ENCODE measurements at regions of chr6 and their contacts with region 1.

Region 1: GRCh38 chr6:30942338-30943060 is 1.7 kb downstream of the MUCL3 start:
- DNase-seq: peak; percentile 83 to 95
- H3K4me3 ChIP-seq: no peak overlapping the region
- H3K27ac ChIP-seq: no peak overlapping the region
- H3K4me1 ChIP-seq: peaks cover 6 to 14% (median 9%) of the 10 kb centered on the region in 4 experiments
- H3K27me3 ChIP-seq: no peaks in the 10 kb centered on the region; a peak in 1 of 7 replicates
- CTCF ChIP-seq: peak; percentile 48 to 62 (median 61)
- EP300 ChIP-seq: 0 out of 3 replicates have a peak, but pooled peaks of 1 of the 2 experiments have one; percentile 44
- POLR2A ChIP-seq: peak in 1 of 2 experiments; percentile 60; a peak in 2 of 3 replicates
- RAD21 ChIP-seq: peak; percentile 49 to 58

Region 2: GRCh38 chr6:30857549-30857948 is 85.0 kb before region 1 on chr6:
- CTCF ChIA-PET with region 1: no interaction called
- POLR2A ChIA-PET with region 1: no interaction called
- DNase-seq: no peak
- H3K4me3 ChIP-seq: no peak overlapping the region
- H3K27ac ChIP-seq: no peak overlapping the region
- H3K4me1 ChIP-seq: peaks cover 0 to 3% (median 2%) of the 10 kb centered on the region in 4 experiments; a peak in 2 of 7 replicates
- H3K27me3 ChIP-seq: no peaks in the 10 kb centered on the region
- CTCF ChIP-seq: no peak
- EP300 ChIP-seq: no peak
- POLR2A ChIP-seq: no peak
- RAD21 ChIP-seq: no peak

Region 3: DNA sequence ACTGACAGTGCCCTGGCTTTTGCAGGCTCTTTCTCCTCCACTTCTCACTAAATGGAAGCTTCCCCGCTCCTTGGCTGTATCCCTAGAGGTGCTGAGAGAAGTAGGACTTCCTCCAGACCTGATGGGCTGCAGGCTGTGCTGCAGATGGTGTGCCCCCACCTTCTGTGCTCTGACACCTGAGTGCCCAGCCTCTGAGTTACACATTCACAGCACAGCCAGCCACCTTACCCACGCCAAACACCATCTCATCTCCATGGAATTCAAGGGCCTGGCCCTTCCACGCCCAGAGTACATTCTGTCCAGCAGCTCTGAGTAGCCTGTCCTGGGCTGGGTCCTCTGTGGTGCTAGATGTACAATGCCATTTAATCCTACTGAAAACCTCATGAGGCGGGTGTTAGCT is 15.9 kb before region 1 on chr6:
- CTCF ChIA-PET with region 1: interaction called, 21 read pairs
- POLR2A ChIA-PET with region 1: interaction called, 8 read pairs
- DNase-seq: no peak
- H3K4me3 ChIP-seq: no peak overlapping the region
- H3K27ac ChIP-seq: no peak overlapping the region
- H3K4me1 ChIP-seq: peaks cover 0 to 3% (median under 1%) of the 10 kb centered on the region in 4 experiments; a peak in 2 of 7 replicates
- H3K27me3 ChIP-seq: no peaks in the 10 kb centered on the region
- CTCF ChIP-seq: no peak
- EP300 ChIP-seq: no peak
- POLR2A ChIP-seq: no peak
- RAD21 ChIP-seq: no peak

Region 4: DNA sequence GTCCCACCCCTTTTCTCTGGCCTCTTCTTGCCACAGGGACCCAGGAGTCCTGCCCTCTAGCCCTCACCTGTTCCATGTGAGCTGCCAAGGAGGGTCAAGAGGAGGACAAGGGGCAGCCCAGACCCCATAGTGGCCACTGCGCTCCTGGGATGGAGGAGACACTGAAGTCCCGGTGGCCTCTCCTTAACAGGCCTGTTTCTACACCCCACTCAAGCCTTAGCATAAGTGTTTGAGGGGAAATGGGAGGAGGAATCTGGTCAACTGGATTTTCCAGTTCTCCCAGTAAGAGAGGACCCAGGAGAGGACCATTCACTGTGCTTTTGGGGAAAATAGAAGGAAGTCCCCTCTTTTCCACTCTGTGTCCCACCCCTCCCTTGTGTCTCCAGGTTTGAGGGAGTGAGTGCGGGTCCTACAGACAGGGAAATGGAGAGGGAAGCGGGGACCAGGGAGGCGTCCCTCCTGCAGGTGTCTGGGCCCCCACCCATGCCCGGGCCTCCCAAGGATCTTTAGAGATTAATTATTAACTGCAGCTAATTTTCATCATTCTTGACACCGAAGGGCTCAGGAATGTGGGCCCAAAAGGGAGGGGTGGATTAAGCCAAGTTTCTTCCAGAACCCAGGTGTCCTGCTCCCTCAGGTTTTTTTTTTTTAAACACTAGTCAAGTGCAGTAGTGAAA is 10.4 kb before region 1 on chr6 and contains the start of gene SFTA2:
- CTCF ChIA-PET with region 1: interaction called, 13 read pairs
- POLR2A ChIA-PET with region 1: interaction called, 8 read pairs
- DNase-seq: no peak
- H3K4me3 ChIP-seq: no peak within 1 kb of the TSS
- H3K27ac ChIP-seq: no peak within 1 kb of the TSS
- H3K4me1 ChIP-seq: 0 out of 7 replicates have a peak, but pooled peaks cover 0 to 3% (median 0%) of the 10 kb centered on the region in 4 experiments
- H3K27me3 ChIP-seq: no peaks in the 10 kb centered on the region
- CTCF ChIP-seq: no peak
- EP300 ChIP-seq: no peak
- POLR2A ChIP-seq: no peak
- RAD21 ChIP-seq: no peak
- total RNA-seq, gene SFTA2: not detected in 2 replicates